ENCODE measurements at regions of chr5 and their contacts with region 1.

Region 1: GRCh38 chr5:90529194-90529938 is at the start of gene LYSMD3:
- DNase-seq: peak; percentile 98
- ATAC-seq: peak; percentile 100
- total RNA-seq, gene LYSMD3: 18.0 TPM

Region 2: DNA sequence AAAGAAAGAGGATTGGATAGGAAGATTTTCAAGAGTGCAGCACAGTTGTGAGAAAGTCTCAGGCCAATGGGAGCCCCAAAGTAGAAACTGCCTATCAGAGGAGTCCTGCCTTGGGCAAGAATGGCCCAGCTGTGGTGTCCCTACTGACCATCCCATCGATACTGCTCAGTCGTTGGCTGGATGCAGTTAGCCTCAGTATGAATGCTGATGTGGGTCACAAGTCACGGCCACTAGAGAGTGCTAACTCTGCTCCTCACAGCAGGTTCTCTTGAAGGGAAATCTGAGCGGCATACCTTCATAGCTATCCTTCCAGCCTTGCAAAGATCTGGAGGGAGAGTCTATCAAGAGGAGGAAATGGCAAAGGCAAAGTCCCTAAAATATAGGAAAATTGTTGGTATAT is 108.2 kb before region 1 on chr5:
- intact Hi-C with region 1: loop called (anchors 10 kb)
- DNase-seq: no peak
- ATAC-seq: no peak

Region 3: GRCh38 chr5:90474235-90475109 is 54.9 kb before region 1 on chr5 and contains the starts of genes MBLAC2 and POLR3G:
- intact Hi-C with region 1: loop called (anchors 10 kb)
- DNase-seq: peak; percentile 94
- ATAC-seq: peak; percentile 98
- total RNA-seq, gene MBLAC2: 3.8 TPM
- total RNA-seq, gene POLR3G: 0.46 TPM

Measured in Right ventricle myocardium superior (tissue), 1 donor.